A549 (cell line): ENCODE measurements at regions of chr5 and their contacts with region 1.

Region 1: GRCh38 chr5:149298842-149299404 is 27.3 kb downstream of the AFAP1L1 start:
- DNase-seq: no peak
- ATAC-seq: no peak
- H3K4me3 ChIP-seq: no peak overlapping the region
- H3K27ac ChIP-seq: no peak overlapping the region
- H3K4me1 ChIP-seq: no peaks in the 10 kb centered on the region
- CTCF ChIP-seq: no peak
- EP300 ChIP-seq: no peak
- POLR2A ChIP-seq: no peak
- RAD21 ChIP-seq: no peak

Region 2: DNA sequence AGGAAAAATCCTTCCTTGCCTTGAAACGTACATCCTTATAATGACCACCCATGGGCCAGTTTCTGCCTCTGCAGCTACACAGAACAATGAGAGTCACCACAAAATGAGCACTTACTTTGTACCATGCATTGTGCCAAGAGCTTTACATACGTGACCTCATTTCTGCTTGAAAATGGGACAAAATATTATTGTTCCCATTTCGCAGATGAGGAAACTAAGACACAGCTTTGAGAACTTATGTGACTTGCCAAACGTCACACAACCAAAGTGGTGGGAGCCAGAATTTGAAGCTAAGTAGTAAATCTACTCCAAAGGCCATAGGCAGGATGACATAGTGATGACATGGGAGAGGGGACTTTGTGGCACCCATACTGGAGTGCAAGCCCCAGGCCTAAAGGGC is 11.6 kb after region 1 on chr5:
- CTCF ChIA-PET with region 1: interaction called, 26 read pairs
- POLR2A ChIA-PET with region 1: no interaction called
- DNase-seq: no peak
- ATAC-seq: no peak
- H3K4me3 ChIP-seq: no peak overlapping the region
- H3K27ac ChIP-seq: no peak overlapping the region
- H3K4me1 ChIP-seq: no peaks in the 10 kb centered on the region
- CTCF ChIP-seq: no peak
- EP300 ChIP-seq: no peak
- POLR2A ChIP-seq: no peak
- RAD21 ChIP-seq: no peak

Region 3: GRCh38 chr5:149363358-149363757 is 64.4 kb after region 1 on chr5:
- CTCF ChIA-PET with region 1: no interaction called
- POLR2A ChIA-PET with region 1: no interaction called
- DNase-seq: no peak
- ATAC-seq: no peak
- H3K4me3 ChIP-seq: no peak overlapping the region
- H3K27ac ChIP-seq: no peak overlapping the region
- H3K4me1 ChIP-seq: peaks cover 10% of the 10 kb centered on the region; the same call in 1 of the 3 replicates
- CTCF ChIP-seq: no peak
- EP300 ChIP-seq: no peak
- POLR2A ChIP-seq: no peak
- RAD21 ChIP-seq: no peak